GM13976 (cell line): ENCODE measurements at regions of chr5 and their contacts with region 1.

Region 1: GRCh38 chr5:96876292-96876850 is at the start of gene ERAP2:
- DNase-seq: peak; percentile 10
- CTCF ChIP-seq: no peak

Region 2: GRCh38 chr5:96927008-96927407 is 50.6 kb after region 1 on chr5:
- in situ Hi-C with region 1: loop called (anchors 5 kb)
- DNase-seq: no peak
- CTCF ChIP-seq: no peak